Naive thymus-derived CD4-positive, alpha-beta T cell (primary cell): ENCODE measurements at regions of chr15 and their contacts with region 1.

Region 1: DNA sequence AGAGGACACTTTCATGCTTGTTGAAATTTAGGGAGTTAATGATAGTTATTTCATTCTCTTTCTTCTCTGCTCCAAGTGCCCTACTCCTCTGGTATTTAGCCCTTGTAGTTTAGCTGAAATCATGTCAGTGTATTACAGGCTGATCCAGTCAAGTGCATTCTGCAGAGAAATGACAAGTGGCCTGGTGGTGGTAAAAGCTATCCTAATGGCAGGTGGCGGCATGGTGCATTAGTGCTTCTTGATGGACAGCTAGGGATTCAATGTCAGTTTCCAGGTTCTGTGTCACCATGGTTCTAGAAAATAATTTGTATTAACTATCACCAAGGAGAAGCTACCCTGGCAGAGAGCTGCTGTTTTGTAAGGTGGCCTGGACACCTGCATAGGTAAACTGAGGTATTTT is 90.0 kb upstream of the BNIP2 start:
- DNase-seq: no peak
- ATAC-seq: no peak
- H3K4me3 ChIP-seq: no peak overlapping the region
- H3K4me3 Mint-ChIP-seq: no peak overlapping the region
- H3K27ac ChIP-seq: no peak overlapping the region
- H3K27ac Mint-ChIP-seq: no peak overlapping the region
- H3K4me1 ChIP-seq: peaks cover 0 to 3% of the 10 kb centered on the region in 2 donors
- H3K4me1 Mint-ChIP-seq: peaks cover 2 to 20% (median 12%) of the 10 kb centered on the region in 7 donors
- H3K27me3 ChIP-seq: no peaks in the 10 kb centered on the region
- H3K27me3 Mint-ChIP-seq: peaks cover 0 to 32% (median 0%) of the 10 kb centered on the region in 5 donors

Region 2: DNA sequence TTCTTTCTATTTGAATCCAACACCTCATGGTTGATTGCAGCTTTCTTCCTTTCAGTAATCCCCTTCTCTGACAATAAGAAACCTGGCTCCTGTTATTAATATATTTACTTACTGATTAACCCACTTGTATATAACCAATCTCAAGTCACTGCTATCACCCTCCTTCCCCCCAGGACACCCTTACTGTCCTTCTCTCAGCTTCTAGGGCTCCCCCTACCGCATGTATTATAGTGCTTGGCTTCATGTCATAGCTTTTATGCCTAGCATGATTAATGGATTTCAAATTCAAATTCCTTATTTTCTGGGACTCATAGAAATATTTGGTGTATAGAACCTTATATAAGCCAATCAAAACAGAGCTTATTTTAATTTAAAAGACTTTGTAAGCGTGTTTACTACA is 14.3 kb before region 1 on chr15:
- CTCF ChIA-PET with region 1: no interaction called
- POLR2A ChIA-PET with region 1: interaction called, 3 read pairs
- intact Hi-C with region 1: loop called in 1 of 2 experiments (anchors 2 kb)
- DNase-seq: no peak
- ATAC-seq: no peak
- H3K4me3 ChIP-seq: no peak overlapping the region
- H3K4me3 Mint-ChIP-seq: no peak overlapping the region
- H3K27ac ChIP-seq: no peak overlapping the region
- H3K27ac Mint-ChIP-seq: no peak overlapping the region
- H3K4me1 ChIP-seq: no peaks in the 10 kb centered on the region
- H3K4me1 Mint-ChIP-seq: peaks cover 0 to 11% (median 8%) of the 10 kb centered on the region in 7 donors
- H3K27me3 ChIP-seq: no peaks in the 10 kb centered on the region
- H3K27me3 Mint-ChIP-seq: peaks cover 0 to 19% (median 0%) of the 10 kb centered on the region in 5 donors

Region 3: GRCh38 chr15:59792359-59792758 is 13.2 kb after region 1 on chr15:
- CTCF ChIA-PET with region 1: no interaction called
- POLR2A ChIA-PET with region 1: interaction called, 5 read pairs
- intact Hi-C with region 1: loop called in 1 of 2 experiments (anchors 2 kb)
- DNase-seq: peak in 7 of 9 donors; percentile 28 to 69 (median 53)
- ATAC-seq: peak; percentile 62
- H3K4me3 ChIP-seq: no peak overlapping the region
- H3K4me3 Mint-ChIP-seq: peak overlapping the region; percentile 62 to 87 (median 76)
- H3K27ac ChIP-seq: peak overlapping the region; percentile 52
- H3K27ac Mint-ChIP-seq: peak overlapping the region in 8 of 9 donors; percentile 85 to 98 (median 90)
- H3K4me1 ChIP-seq: peaks cover 17 to 53% of the 10 kb centered on the region in 2 donors
- H3K4me1 Mint-ChIP-seq: peaks cover 27 to 92% (median 81%) of the 10 kb centered on the region in 7 donors
- H3K27me3 ChIP-seq: no peaks in the 10 kb centered on the region
- H3K27me3 Mint-ChIP-seq: peaks cover 0 to 34% (median 0%) of the 10 kb centered on the region in 5 donors

Region 4: GRCh38 chr15:59814409-59814808 is 35.3 kb after region 1 on chr15:
- CTCF ChIA-PET with region 1: no interaction called
- POLR2A ChIA-PET with region 1: no interaction called
- intact Hi-C with region 1: loop called in 1 of 2 experiments (anchors 5 kb)
- DNase-seq: peak in 7 of 9 donors; percentile 51 to 73 (median 64)
- ATAC-seq: peak; percentile 91
- H3K4me3 ChIP-seq: no peak overlapping the region
- H3K4me3 Mint-ChIP-seq: peak overlapping the region; percentile 23 to 84 (median 58)
- H3K27ac ChIP-seq: peak overlapping the region; percentile 41
- H3K27ac Mint-ChIP-seq: peak overlapping the region; percentile 2 to 94 (median 90)
- H3K4me1 ChIP-seq: peaks cover 0 to 22% of the 10 kb centered on the region in 2 donors
- H3K4me1 Mint-ChIP-seq: peaks cover 9 to 39% (median 35%) of the 10 kb centered on the region in 7 donors
- H3K27me3 ChIP-seq: no peaks in the 10 kb centered on the region
- H3K27me3 Mint-ChIP-seq: peaks cover 0 to 37% (median 0%) of the 10 kb centered on the region in 5 donors

Region 5: GRCh38 chr15:59904450-59905135 is 125.5 kb after region 1 on chr15:
- CTCF ChIA-PET with region 1: no interaction called
- POLR2A ChIA-PET with region 1: no interaction called
- intact Hi-C with region 1: no loop called
- DNase-seq: no peak
- ATAC-seq: no peak
- H3K4me3 ChIP-seq: no peak overlapping the region
- H3K4me3 Mint-ChIP-seq: no peak overlapping the region
- H3K27ac ChIP-seq: no peak overlapping the region
- H3K27ac Mint-ChIP-seq: peak overlapping the region in 1 of 9 donors; percentile 36
- H3K4me1 ChIP-seq: no peaks in the 10 kb centered on the region
- H3K4me1 Mint-ChIP-seq: no peaks in the 10 kb centered on the region
- H3K27me3 ChIP-seq: no peaks in the 10 kb centered on the region
- H3K27me3 Mint-ChIP-seq: peaks cover 18 to 55% (median 32%) of the 10 kb centered on the region in 5 donors